Naive thymus-derived CD8-positive, alpha-beta T cell (primary cell): ENCODE measurements at regions of chr11 and their contacts with region 1.

Region 1: DNA sequence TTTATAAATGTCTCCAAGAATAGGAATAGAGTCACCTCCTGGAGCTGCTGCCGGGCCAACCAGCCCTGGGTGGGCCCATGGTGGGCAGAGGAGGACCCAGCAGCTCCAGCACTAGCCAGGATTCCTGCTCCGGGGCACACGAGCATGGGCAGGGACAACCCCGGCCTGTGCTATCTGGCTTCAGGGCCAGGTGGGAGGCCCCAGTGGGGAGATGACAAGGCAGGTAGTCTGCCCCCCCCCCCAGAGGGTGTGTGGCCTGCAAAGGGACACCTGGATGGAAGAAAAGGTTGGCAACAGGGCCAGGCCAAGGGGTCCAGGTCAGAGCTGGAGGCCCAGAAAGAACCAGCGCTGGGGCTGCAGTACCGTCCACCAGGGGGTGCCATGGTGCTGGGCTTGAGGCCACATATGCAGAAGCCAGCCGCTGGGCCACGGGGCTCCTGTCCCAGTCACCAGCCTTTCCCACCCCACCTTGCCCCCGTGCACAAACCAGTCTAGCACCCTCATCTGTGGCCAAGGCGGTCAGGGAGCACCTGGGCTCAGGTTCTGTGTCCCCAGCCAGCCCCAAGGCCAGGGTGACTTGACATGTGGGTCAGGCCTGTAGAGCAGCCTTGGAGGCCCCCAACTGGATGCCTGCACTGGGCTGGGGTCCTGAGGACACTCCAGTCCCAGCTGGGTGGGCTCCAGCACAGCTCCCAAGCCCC is 3.5 kb downstream of the TSPAN32 start:
- DNase-seq: peak; percentile 62 to 90 (median 78)
- ATAC-seq: peak; percentile 38 to 41
- H3K4me3 Mint-ChIP-seq: peak overlapping the region; percentile 81 to 98 (median 93)
- H3K27ac Mint-ChIP-seq: peak overlapping the region; percentile 85 to 98 (median 94)
- H3K4me1 Mint-ChIP-seq: peaks cover 26 to 67% (median 51%) of the 10 kb centered on the region in 4 donors
- H3K27me3 Mint-ChIP-seq: no peaks in the 10 kb centered on the region

Region 2: GRCh38 chr11:2036863-2037486 is 268.3 kb before region 1 on chr11:
- POLR2A ChIA-PET with region 1: no interaction called
- DNase-seq: no peak
- ATAC-seq: peak; percentile 59 to 60
- H3K4me3 Mint-ChIP-seq: no peak overlapping the region
- H3K27ac Mint-ChIP-seq: no peak overlapping the region
- H3K4me1 Mint-ChIP-seq: no peaks in the 10 kb centered on the region
- H3K27me3 Mint-ChIP-seq: no peaks in the 10 kb centered on the region

Region 3: DNA sequence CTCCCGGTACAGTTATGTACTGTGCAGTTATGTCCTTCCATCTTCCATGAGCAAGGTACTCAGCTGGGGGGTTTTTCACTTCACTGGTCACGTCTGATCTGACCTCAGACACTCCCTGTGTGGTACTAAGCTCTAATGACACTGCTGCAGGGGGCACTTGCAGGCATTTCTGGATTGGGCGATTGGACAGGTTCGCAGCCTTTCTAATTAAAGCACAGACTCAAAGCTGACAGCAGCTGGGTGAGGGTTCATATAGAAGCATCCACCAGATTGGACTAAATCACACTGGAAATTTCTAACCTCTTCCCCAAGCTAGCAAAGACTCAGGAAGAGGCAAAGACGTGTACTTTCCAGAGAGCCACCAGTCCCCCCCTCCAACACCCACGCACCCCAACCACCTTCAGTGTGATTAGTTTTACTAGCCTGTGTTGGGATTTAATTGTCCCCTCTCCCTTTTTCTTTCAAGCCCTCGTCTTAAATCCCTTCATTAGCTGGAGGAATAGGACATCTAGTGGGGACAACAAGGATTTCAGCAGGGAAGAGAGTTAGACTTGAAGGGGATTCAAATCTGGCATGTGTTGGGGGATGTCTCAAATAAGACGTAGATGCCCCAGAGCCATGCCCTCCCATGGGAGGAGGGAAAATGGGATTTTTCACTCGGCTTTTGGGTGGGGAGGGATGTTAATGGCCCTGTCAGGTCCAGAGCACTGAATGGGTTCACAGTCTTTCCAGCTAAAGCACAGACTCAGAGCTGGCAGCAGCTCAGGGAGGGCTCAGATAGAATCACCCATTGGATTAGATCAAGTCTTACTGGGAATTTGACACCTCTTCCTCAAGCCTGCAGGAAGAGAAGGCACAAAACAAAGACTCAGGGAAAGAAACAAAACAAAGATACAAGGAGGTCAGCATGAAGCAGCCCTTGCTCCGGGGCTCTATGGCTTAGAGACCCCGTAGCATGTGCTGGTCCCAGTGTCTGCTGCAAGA is 155.1 kb before region 1 on chr11:
- POLR2A ChIA-PET with region 1: no interaction called
- DNase-seq: no peak
- ATAC-seq: no peak
- H3K4me3 Mint-ChIP-seq: no peak overlapping the region
- H3K27ac Mint-ChIP-seq: peak overlapping the region in 1 of 10 donors; percentile 43
- H3K4me1 Mint-ChIP-seq: peaks cover 7 to 11% (median 7%) of the 10 kb centered on the region in 4 donors
- H3K27me3 Mint-ChIP-seq: peaks cover 12 to 62% (median 45%) of the 10 kb centered on the region in 5 donors

Region 4: GRCh38 chr11:2377511-2378443 is 72.5 kb after region 1 on chr11:
- POLR2A ChIA-PET with region 1: interaction called, 18 read pairs
- DNase-seq: peak in 8 of 10 donors; percentile 20 to 75 (median 49)
- ATAC-seq: peak; percentile 59 to 67
- H3K4me3 Mint-ChIP-seq: peak overlapping the region; percentile 71 to 87 (median 80)
- H3K27ac Mint-ChIP-seq: peak overlapping the region in 9 of 10 donors; percentile 43 to 92 (median 79)
- H3K4me1 Mint-ChIP-seq: peaks cover 11 to 46% (median 39%) of the 10 kb centered on the region in 4 donors
- H3K27me3 Mint-ChIP-seq: no peaks in the 10 kb centered on the region

Region 5: DNA sequence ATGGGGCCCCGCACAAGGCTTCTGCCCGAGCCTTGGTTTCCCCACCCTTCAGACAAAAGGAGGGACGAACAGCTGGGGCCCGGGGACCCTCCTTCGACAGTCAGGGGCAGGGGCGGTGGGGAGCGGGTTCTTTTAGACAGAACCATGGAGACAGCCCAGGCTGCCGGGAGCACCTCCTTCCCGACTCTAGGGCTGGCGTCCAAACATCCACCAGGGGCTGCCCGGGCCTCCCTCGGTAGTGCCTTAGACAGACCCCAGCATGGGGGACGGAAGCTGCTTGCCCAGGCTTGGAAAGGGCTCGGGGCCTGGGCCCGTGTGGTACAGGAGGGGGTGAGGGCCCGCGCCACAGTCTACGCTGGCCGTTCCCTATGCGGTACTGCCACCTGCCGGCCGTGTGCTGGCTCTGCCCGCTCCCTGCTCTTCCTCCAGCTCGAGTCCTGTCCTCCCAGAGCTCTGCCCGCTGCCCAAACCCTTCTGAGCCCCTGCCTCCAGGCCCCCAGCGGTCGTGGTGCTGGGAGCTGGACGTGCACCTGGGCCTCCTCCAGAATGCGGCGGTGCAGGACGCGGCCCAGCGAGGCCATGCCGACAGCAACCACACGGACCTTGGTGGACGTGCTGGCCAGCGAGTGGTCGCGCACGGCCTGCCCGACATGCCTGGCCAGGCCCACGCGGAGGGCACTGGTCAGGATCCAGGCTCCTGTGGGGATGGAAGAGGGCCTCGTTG is 115.4 kb after region 1 on chr11:
- POLR2A ChIA-PET with region 1: interaction called, 53 read pairs
- DNase-seq: peak; percentile 39 to 81 (median 69)
- ATAC-seq: peak; percentile 96 to 98
- H3K4me3 Mint-ChIP-seq: no peak overlapping the region
- H3K27ac Mint-ChIP-seq: no peak overlapping the region
- H3K4me1 Mint-ChIP-seq: peaks cover 0 to 5% (median 3%) of the 10 kb centered on the region in 4 donors
- H3K27me3 Mint-ChIP-seq: no peaks in the 10 kb centered on the region